GM18951 (cell line): ENCODE measurements at regions of chr6 and their contacts with region 1.

Region 1: GRCh38 chr6:133377219-133377618 is 136.1 kb downstream of the EYA4 start:
- POLR2A ChIP-seq: no peak

Region 2: GRCh38 chr6:133040094-133040802 is 337.0 kb before region 1 on chr6:
- in situ Hi-C with region 1: loop called (anchors 10 kb)
- POLR2A ChIP-seq: no peak